Right ventricle myocardium superior (tissue), 1 donor: ENCODE measurements at regions of chr4 and their contacts with region 1.

Region 1: DNA sequence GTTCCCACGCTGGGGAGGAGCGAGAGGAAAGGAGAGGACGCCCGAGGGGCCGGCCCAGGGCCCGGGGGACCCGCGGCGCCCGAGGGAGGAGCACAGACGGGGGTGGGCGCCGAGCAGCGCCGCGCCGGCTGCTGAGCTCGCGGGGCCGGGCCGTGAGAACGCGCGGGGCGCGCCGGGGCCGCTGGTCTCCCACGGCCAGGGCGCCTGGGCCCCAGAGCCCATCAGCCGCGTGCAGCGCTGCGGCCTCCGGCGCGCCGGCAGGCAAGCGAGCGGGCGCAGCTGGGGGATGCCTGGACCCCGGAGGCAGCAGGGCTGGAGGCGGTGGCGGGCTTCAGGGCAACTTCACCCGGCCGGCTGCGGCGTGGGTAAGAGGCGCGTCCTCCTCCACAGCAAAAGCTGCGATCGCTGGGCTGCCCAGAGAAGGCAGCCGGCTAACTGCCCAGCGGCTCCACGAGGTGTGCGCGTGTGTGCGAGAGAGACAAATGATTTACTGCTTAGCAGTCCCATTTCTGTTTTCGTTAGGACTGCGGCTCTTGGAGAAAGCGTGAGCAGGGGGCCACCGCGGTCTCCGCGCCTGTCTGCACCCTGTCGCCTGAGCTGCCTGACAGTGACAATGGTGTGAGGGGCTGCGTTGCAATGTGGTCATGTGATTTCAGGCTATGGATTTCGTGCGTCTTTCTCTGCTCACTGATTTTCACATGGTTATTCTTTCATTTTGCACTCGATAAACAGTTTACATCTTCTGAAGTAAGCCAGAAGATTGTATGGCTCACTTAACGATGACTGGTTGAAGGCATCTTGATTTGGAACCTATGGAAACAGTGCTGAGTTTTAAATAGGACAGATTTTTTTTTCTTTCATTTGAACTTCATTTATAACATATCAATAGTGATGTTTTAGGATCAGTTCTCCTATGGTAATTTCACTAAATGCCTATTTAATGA is 1.2 kb downstream of the GUCY1A1 start:
- DNase-seq: peak; percentile 69
- ATAC-seq: peak; percentile 81

Region 2: GRCh38 chr4:155543126-155543765 is 124.6 kb before region 1 on chr4:
- intact Hi-C with region 1: loop called (anchors 10 kb)
- DNase-seq: no peak
- ATAC-seq: peak; percentile 32

Region 3: GRCh38 chr4:155780775-155781174 is 112.9 kb after region 1 on chr4:
- intact Hi-C with region 1: loop called (anchors 5 kb)
- DNase-seq: no peak
- ATAC-seq: peak; percentile 33

Region 4: GRCh38 chr4:155822572-155822971 is 154.7 kb after region 1 on chr4:
- intact Hi-C with region 1: no loop called
- DNase-seq: no peak
- ATAC-seq: no peak